ENCODE measurements at regions of chr5 and their contacts with region 1.

Region 1: DNA sequence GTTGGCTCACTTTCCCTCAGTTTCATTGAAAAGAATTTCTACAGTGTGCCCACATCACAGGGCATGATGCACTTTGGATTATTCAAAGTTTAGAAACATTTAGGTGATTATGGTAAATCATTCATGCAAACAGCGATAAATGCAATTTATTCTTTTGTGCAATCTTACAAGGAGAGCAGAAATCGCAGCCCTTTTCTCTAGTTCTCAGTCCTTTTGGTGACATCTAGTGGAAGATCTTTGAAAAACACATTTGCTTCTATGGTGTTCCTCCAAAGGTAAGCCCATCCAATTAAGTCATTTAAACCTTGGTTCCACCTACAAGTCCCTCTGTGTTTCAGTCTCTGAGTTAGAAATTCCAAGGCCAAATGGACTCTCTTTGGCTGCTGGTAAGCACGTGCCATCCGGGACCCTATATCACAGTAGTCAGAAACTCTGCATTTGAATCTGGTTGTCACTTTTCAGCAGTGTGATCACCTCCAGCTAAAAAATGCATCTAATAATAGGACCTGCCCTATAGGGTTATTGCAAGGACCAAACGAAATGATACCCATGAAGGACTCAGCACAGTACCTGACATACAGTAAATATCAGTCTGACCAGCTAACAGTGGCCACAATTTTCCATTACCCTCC is 66.4 kb downstream of the MACROH2A1 start:
- DNase-seq: no peak
- H3K4me3 ChIP-seq: no peak overlapping the region
- H3K27ac ChIP-seq: no peak overlapping the region
- H3K4me1 ChIP-seq: peaks cover 0 to 47% (median 37%) of the 10 kb centered on the region in 4 donors
- H3K27me3 ChIP-seq: no peaks in the 10 kb centered on the region
- CTCF ChIP-seq: peak in 3 of 4 experiments; percentile 39 to 56 (median 40)
- EP300 ChIP-seq: no peak
- POLR2A ChIP-seq: no peak

Region 2: GRCh38 chr5:134958765-134959168 is 373.9 kb before region 1 on chr5:
- intact Hi-C with region 1: no loop called
- DNase-seq: no peak
- H3K4me3 ChIP-seq: no peak overlapping the region
- H3K27ac ChIP-seq: no peak overlapping the region
- H3K4me1 ChIP-seq: peaks cover 0 to 9% (median 2%) of the 10 kb centered on the region in 4 donors
- H3K27me3 ChIP-seq: no peaks in the 10 kb centered on the region
- CTCF ChIP-seq: no peak
- EP300 ChIP-seq: no peak
- POLR2A ChIP-seq: no peak

Region 3: GRCh38 chr5:135039271-135040045 is 293.2 kb before region 1 on chr5:
- intact Hi-C with region 1: loop called (anchors 5 kb)
- DNase-seq: no peak
- H3K4me3 ChIP-seq: peak overlapping the region in 3 of 4 donors; percentile 19 to 29 (median 20)
- H3K27ac ChIP-seq: no peak overlapping the region
- H3K4me1 ChIP-seq: peaks cover 0 to 27% (median 24%) of the 10 kb centered on the region in 4 donors
- H3K27me3 ChIP-seq: peaks cover 49 to 100% (median 78%) of the 10 kb centered on the region in 3 donors
- CTCF ChIP-seq: no peak
- EP300 ChIP-seq: no peak
- POLR2A ChIP-seq: no peak

Region 4: DNA sequence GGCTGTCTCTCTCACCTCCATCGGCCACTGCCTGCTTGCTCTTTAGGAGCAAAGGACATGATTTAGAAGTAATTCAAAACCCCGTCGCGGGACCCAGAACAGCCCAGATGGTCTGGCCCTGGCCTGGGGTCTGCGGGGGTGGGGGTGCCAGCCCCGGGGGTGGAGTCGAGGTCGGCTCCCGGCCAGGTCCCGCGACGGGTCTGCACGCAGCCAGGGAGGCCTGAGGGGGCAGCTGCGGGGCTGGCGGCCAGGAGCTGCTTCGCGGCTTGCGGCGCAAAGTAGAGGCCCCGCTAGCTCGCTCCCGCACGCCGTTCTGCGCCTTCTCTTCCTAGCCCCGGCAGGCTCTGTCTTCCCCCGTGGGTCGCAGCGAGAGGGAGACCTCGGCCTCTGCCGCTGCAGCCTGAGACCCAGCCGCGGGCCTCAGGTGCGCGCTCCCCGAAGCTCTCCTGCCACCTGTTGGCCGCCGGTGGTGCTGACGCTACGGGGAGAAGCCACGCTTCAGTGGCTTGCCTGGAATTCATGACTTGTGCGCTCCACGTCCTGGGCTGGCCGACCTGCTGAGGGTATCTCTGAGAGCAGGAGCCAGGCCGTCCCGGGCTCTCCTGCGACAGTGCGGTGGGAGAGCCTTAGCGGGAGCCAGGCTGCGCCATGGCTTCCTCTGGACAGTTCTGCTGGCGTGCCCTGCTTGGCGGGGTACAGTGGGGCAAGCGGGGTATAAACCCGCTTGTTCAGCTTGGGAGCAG is 141.4 kb before region 1 on chr5:
- intact Hi-C with region 1: loop called (anchors 5 kb)
- DNase-seq: peak; percentile 85
- H3K4me3 ChIP-seq: peak overlapping the region; percentile 10 to 54 (median 46)
- H3K27ac ChIP-seq: peak overlapping the region in 2 of 4 donors; percentile 23 to 29
- H3K4me1 ChIP-seq: peaks cover 0 to 10% (median 9%) of the 10 kb centered on the region in 4 donors
- H3K27me3 ChIP-seq: no peaks in the 10 kb centered on the region
- CTCF ChIP-seq: peak in 3 of 4 experiments; percentile 80 to 93 (median 89)
- EP300 ChIP-seq: no peak
- POLR2A ChIP-seq: no peak

Region 5: GRCh38 chr5:135214897-135215616 is 117.6 kb before region 1 on chr5:
- intact Hi-C with region 1: loop called (anchors 5 kb)
- DNase-seq: peak; percentile 56
- H3K4me3 ChIP-seq: no peak overlapping the region
- H3K27ac ChIP-seq: no peak overlapping the region
- H3K4me1 ChIP-seq: peaks cover 0 to 28% (median 18%) of the 10 kb centered on the region in 4 donors
- H3K27me3 ChIP-seq: no peaks in the 10 kb centered on the region
- CTCF ChIP-seq: no peak
- EP300 ChIP-seq: no peak
- POLR2A ChIP-seq: no peak

Region 6: GRCh38 chr5:135242021-135242865 is 90.4 kb before region 1 on chr5:
- intact Hi-C with region 1: loop called (anchors 5 kb)
- DNase-seq: peak; percentile 48
- H3K4me3 ChIP-seq: no peak overlapping the region
- H3K27ac ChIP-seq: peak overlapping the region; percentile 69 to 95 (median 92)
- H3K4me1 ChIP-seq: peaks cover 0 to 91% (median 85%) of the 10 kb centered on the region in 4 donors
- H3K27me3 ChIP-seq: no peaks in the 10 kb centered on the region
- CTCF ChIP-seq: no peak
- EP300 ChIP-seq: peak in 1 of 4 donors; percentile 16
- POLR2A ChIP-seq: no peak

Measured in sigmoid colon (tissue), 7 donors.